H1 (cell line): ENCODE measurements at regions of chr19 and their contacts with region 1.

Region 1: DNA sequence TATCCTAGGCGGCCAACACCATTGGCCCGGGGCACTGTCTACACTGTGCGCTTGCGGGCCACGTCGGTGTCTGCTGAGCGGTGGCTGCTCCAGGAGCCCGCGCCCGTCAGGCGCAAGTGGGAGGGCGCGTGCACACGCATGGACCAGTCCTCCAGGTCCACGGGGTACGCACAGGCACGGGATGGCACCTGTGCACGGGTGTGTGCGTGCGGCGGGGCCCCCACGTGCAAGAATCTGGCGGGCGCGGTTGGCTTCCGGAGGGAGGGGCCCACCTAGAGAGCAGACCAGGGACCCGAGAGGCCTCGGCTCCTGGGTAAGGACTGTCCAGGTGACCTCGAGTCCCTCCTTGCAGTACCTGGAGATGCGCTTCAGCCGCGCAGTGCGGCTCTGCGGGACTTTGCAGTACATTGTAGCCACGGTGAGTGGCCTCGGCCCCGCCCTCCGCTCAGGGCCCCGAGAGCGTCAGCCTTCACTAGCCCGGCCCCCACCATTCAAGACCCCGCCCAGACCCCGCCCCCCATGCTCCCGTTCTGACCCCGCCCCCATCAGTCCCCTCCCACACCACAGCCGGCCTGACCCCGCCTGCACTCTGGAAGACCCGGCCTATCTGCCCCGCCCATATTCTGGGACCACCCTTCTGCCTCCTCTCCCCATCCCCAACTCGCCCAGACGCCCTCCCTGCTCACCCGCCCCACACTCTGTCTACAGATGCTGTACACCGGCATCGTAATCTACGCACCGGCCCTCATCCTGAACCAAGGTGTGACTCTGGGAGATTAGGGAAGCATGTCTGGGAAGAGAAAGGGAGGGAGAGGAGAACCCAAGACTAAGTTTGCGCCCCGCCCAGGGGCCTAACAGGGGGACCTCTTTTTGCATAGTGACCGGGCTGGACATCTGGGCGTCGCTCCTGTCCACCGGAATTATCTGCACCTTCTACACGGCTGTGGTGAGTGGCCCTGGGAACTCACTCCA is 2.3 kb downstream of the SLC5A5 start:
- DNase-seq: peak in 1 of 2 experiments; percentile 91
- H3K4me3 ChIP-seq: peak overlapping the region; percentile 64 to 78 (median 72)
- H3K27ac ChIP-seq: no peak overlapping the region
- H3K4me1 ChIP-seq: peaks cover 0 to 6% (median under 1%) of the 10 kb centered on the region in 4 experiments; a peak in 3 of 7 replicates
- H3K27me3 ChIP-seq: peaks cover 0 to 9% (median 5%) of the 10 kb centered on the region in 4 experiments; a peak in 5 of 7 replicates
- CTCF ChIP-seq: 0 out of 4 replicates have a peak, but pooled peaks of 1 of the 3 experiments have one; percentile 1
- EP300 ChIP-seq: no peak
- POLR2A ChIP-seq: no peak
- RAD21 ChIP-seq: no peak

Region 2: GRCh38 chr19:17826583-17826982 is 47.5 kb before region 1 on chr19:
- CTCF ChIA-PET with region 1: no interaction called
- POLR2A ChIA-PET with region 1: no interaction called
- DNase-seq: no peak
- H3K4me3 ChIP-seq: no peak overlapping the region
- H3K27ac ChIP-seq: no peak overlapping the region
- H3K4me1 ChIP-seq: peaks cover 0 to 8% (median 1%) of the 10 kb centered on the region in 4 experiments; a peak in 6 of 7 replicates
- H3K27me3 ChIP-seq: no peaks in the 10 kb centered on the region
- CTCF ChIP-seq: no peak
- EP300 ChIP-seq: no peak
- POLR2A ChIP-seq: no peak
- RAD21 ChIP-seq: no peak

Region 3: DNA sequence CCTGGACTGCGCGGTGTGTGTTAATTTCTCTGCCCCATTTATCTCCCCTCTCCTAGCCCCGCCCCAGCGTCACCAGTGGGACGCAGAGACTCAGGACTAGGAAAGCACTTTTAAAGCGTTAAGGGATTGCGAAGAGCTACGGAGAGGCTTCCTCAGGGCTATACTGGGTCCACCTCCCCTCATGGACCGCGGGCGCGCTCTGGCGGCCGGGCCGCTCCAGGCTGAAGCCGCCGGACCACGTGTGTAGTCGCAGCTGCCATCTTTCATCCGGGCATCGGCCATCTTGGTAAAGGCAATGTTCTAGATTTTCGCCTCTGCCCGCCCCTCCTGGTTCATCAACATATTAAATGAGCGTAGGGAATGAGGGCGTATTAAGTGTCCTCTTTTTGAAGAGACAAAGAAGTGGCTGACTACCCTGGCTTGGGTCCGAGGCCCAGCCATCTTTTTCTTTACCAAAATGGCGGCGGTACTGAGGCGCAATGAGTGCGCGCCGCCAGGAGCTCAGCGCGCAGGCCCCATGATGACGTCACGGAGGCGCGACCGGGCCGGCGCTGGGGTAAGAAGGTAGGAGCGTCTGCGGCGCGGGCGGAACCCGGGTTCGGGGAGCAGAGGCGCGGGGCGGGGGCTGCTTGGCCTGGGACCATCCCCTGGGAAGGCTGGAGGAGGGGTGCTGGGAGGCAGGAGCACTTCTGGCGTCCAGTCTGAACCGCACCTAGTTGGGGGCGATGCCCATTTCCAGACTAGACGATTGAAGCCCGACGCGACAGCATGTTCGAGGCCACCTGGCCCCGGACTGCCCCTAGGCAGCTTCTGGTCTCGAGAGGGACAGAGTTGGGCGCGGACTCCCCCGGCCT is 58.6 kb after region 1 on chr19 and contains the start of gene CCDC124:
- CTCF ChIA-PET with region 1: interaction called, 105 read pairs
- POLR2A ChIA-PET with region 1: interaction called, 392 read pairs
- DNase-seq: peak; percentile 86 to 95
- H3K4me3 ChIP-seq: peak within 1 kb of the TSS; percentile 80 to 94 (median 91)
- H3K27ac ChIP-seq: peak within 1 kb of the TSS; percentile 96
- H3K4me1 ChIP-seq: peaks cover 0 to 4% (median 2%) of the 10 kb centered on the region in 4 experiments; a peak in 3 of 7 replicates
- H3K27me3 ChIP-seq: no peaks in the 10 kb centered on the region
- CTCF ChIP-seq: peak; percentile 93 to 97 (median 97)
- EP300 ChIP-seq: peak in 1 of 2 experiments; percentile 16; a peak in 1 of 3 replicates
- POLR2A ChIP-seq: no peak; a peak in 2 of 3 replicates
- RAD21 ChIP-seq: peak; percentile 97 to 98
- total RNA-seq, gene CCDC124: 101 and 103 TPM in 2 replicates

Region 4: DNA sequence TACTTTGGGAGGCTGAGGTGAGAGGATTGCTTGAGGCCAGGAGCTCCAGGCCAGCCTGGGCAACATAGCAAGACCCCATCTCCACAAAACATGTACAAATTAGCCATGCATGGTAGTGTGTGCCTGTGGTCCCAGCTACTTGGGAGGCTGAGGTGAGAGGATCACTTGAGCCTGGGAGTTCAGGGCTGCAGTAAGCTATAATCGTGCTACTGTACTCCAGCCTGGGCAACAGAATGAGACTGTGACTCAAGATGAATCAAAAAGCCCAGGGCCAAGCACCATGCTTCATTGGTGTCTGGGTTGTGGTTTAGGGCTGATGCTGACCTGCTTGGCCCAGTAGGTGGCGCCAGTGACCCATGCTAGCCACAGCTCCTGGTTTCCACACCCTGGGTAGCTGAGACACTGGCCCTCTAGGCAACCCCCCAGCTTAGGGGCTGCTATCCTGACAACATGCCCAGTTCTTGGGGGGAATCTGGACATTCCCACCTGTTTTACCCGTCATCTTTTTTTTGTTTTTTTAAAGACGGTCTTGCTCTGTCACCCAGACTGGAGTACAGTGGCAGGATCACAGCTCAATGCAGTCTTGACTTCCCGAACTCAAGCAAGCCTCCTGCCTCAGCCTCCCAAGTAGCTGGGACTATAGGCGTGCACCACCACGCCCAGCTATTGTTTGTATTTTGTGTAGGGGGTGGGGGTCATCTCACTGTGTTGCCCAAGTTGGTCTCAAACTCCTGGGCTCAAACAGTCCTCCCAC is 64.2 kb after region 1 on chr19:
- CTCF ChIA-PET with region 1: interaction called, 105 read pairs
- POLR2A ChIA-PET with region 1: interaction called, 392 read pairs
- DNase-seq: peak in 1 of 2 experiments; percentile 93
- H3K4me3 ChIP-seq: no peak overlapping the region
- H3K27ac ChIP-seq: no peak overlapping the region
- H3K4me1 ChIP-seq: peaks cover 0 to 15% (median 11%) of the 10 kb centered on the region in 4 experiments; a peak in 6 of 7 replicates
- H3K27me3 ChIP-seq: no peaks in the 10 kb centered on the region
- CTCF ChIP-seq: peak; percentile 96 to 98 (median 96)
- EP300 ChIP-seq: no peak
- POLR2A ChIP-seq: no peak
- RAD21 ChIP-seq: peak; percentile 97